PC-9 (cell line): ENCODE measurements at regions of chr7 and their contacts with region 1.

Region 1: GRCh38 chr7:96548664-96549063 is 161.0 kb downstream of the SEM1 start:
- DNase-seq: peak; percentile 84 to 98
- H3K4me3 ChIP-seq: no peak overlapping the region
- H3K27ac ChIP-seq: peak overlapping the region; percentile 52
- H3K4me1 ChIP-seq: peaks cover 35% of the 10 kb centered on the region
- H3K27me3 ChIP-seq: no peaks in the 10 kb centered on the region
- CTCF ChIP-seq: no peak

Region 2: GRCh38 chr7:96219382-96220130 is 329.1 kb before region 1 on chr7:
- CTCF ChIA-PET with region 1: no interaction called
- POLR2A ChIA-PET with region 1: no interaction called
- intact Hi-C with region 1: loop called (anchors 2 kb)
- DNase-seq: peak; percentile 41 to 95
- H3K4me3 ChIP-seq: no peak overlapping the region
- H3K27ac ChIP-seq: peak overlapping the region; percentile 77
- H3K4me1 ChIP-seq: peaks cover 41% of the 10 kb centered on the region
- H3K27me3 ChIP-seq: no peaks in the 10 kb centered on the region
- CTCF ChIP-seq: no peak

Region 3: GRCh38 chr7:96709381-96710228 is 160.9 kb after region 1 on chr7 and contains the start of gene SEM1:
- CTCF ChIA-PET with region 1: no interaction called
- POLR2A ChIA-PET with region 1: interaction called, 3 read pairs
- intact Hi-C with region 1: loop called (anchors 2 kb)
- DNase-seq: peak; percentile 78 to 81
- H3K4me3 ChIP-seq: peak within 1 kb of the TSS; percentile 77
- H3K27ac ChIP-seq: peak within 1 kb of the TSS; percentile 83
- H3K4me1 ChIP-seq: peaks cover 20% of the 10 kb centered on the region
- H3K27me3 ChIP-seq: no peaks in the 10 kb centered on the region
- CTCF ChIP-seq: no peak
- total RNA-seq, gene SEM1: 108 and 131 TPM in 2 replicates

Region 4: DNA sequence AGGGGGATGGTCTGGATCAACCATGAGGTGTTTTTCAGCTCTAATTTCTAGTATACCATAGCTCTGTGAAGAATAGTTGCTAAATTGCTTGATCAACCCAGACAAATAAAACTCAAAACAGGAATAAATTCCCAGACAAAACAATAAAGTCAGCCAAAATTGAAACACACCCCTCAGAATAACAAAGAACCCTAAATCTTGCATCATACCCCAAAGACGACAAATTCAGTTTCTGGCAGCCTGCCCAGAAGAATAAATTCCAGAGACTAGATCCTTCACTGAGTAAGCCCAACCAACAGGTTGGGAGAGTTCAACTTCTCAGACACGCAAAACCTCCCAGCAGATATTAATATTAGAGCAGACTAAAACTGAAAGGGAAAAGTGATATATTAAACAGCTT is 172.2 kb after region 1 on chr7:
- CTCF ChIA-PET with region 1: no interaction called
- POLR2A ChIA-PET with region 1: no interaction called
- intact Hi-C with region 1: loop called (anchors 5 kb)
- DNase-seq: peak; percentile 71 to 81
- H3K4me3 ChIP-seq: no peak overlapping the region
- H3K27ac ChIP-seq: peak overlapping the region; percentile 60
- H3K4me1 ChIP-seq: peaks cover 34% of the 10 kb centered on the region
- H3K27me3 ChIP-seq: no peaks in the 10 kb centered on the region
- CTCF ChIP-seq: no peak